ENCODE measurements at regions of chrX and their contacts with region 1.

Region 1: GRCh38 chrX:100447654-100448397 is 37.8 kb upstream of the PCDH19 start:
- DNase-seq: peak; percentile 53
- ATAC-seq: peak; percentile 93
- H3K4me3 Mint-ChIP-seq: peak overlapping the region; percentile 64
- H3K27ac Mint-ChIP-seq: no peak overlapping the region
- H3K4me1 Mint-ChIP-seq: peaks cover 16% of the 10 kb centered on the region
- H3K27me3 Mint-ChIP-seq: peaks cover 2% of the 10 kb centered on the region; the same call in 1 of the 2 replicates
- CTCF ChIP-seq: peak; percentile 68

Region 2: GRCh38 chrX:100424012-100424411 is 23.8 kb before region 1 on chrX:
- CTCF ChIA-PET with region 1: interaction called, 14 read pairs
- POLR2A ChIA-PET with region 1: no interaction called
- DNase-seq: peak; percentile 42
- ATAC-seq: peak; percentile 86
- H3K4me3 Mint-ChIP-seq: no peak overlapping the region
- H3K27ac Mint-ChIP-seq: no peak overlapping the region
- H3K4me1 Mint-ChIP-seq: peaks cover 6% of the 10 kb centered on the region
- H3K27me3 Mint-ChIP-seq: peaks cover 3% of the 10 kb centered on the region; the same call in 1 of the 2 replicates
- CTCF ChIP-seq: no peak

Region 3: DNA sequence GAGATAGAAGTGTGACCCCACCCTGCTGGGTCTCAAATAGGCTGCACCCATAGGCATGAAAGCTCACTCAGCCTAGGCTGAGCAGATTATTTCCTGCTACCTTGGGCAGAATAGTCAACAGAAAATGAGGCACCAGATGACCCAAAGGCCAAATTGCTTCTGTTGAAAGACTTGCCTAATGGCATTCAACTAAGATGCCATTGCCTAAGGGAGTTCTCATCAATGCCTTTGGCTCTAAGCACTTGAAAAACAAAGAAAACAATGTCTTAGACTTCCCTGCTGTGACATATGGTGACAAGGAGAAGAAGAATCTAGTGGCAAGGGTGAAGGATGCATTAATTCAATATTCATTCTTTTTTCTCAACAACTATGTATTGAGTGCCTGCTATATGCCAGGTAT is 12.1 kb before region 1 on chrX:
- CTCF ChIA-PET with region 1: interaction called, 14 read pairs
- POLR2A ChIA-PET with region 1: no interaction called
- DNase-seq: no peak
- ATAC-seq: peak; percentile 56; the same call in 1 of the 2 replicates
- H3K4me3 Mint-ChIP-seq: no peak overlapping the region
- H3K27ac Mint-ChIP-seq: 0 out of 2 replicates have a peak overlapping the region, but pooled peaks have one; percentile 53
- H3K4me1 Mint-ChIP-seq: peaks cover 30% of the 10 kb centered on the region
- H3K27me3 Mint-ChIP-seq: peaks cover 2% of the 10 kb centered on the region; the same call in 1 of the 2 replicates
- CTCF ChIP-seq: no peak

Region 4: GRCh38 chrX:100615005-100615404 is 167.2 kb after region 1 on chrX:
- CTCF ChIA-PET with region 1: interaction called, 15 read pairs
- POLR2A ChIA-PET with region 1: no interaction called
- DNase-seq: no peak
- ATAC-seq: peak; percentile 81
- H3K4me3 Mint-ChIP-seq: no peak overlapping the region
- H3K27ac Mint-ChIP-seq: no peak overlapping the region
- H3K4me1 Mint-ChIP-seq: peaks cover 23% of the 10 kb centered on the region
- H3K27me3 Mint-ChIP-seq: no peaks in the 10 kb centered on the region
- CTCF ChIP-seq: no peak

Region 5: DNA sequence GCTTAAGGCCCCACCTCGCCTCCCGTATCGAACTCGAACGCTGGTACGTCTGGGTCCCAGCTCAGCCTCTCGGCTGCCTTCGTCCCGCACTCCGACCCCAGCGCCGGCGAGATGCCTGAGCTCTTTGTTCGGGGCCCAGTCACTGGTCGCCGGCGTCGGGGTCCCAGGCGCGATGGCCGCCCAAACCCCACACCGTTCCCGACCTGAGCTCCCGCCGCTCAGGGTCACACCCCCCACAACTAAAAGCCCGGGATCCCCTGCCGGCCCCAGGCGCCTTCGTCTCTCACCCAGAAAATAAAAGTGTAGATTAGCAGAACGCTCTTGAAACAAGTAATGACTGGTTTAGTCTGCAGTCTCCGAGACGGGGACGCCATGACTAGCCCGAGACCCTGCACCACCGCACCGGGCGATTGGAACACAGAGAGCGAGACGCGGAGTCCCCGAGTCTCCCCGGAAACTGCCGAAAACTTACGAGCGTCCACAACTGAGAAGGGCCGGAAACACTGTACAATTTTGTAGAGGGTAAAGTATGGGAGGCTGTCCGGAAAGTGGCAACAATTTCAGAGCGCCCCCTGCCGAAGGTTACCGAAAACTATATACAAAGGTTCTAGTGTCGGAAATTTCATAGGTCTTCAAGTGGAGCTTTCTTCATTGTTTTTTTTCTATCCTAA is 188.6 kb after region 1 on chrX and contains the start of gene TSPAN6:
- CTCF ChIA-PET with region 1: interaction called, 11 read pairs
- POLR2A ChIA-PET with region 1: no interaction called
- DNase-seq: peak; percentile 78
- ATAC-seq: peak; percentile 98
- H3K4me3 Mint-ChIP-seq: peak within 1 kb of the TSS; percentile 97
- H3K27ac Mint-ChIP-seq: peak within 1 kb of the TSS; percentile 99
- H3K4me1 Mint-ChIP-seq: peaks cover 23% of the 10 kb centered on the region
- H3K27me3 Mint-ChIP-seq: no peaks in the 10 kb centered on the region
- CTCF ChIP-seq: no peak; the same call in 1 of the 2 replicates
- total RNA-seq, gene TSPAN6: 47.0 to 50.5 TPM (median 49.8 TPM) in 3 replicates